ENCODE measurements at regions of chr12 and their contacts with region 1.

Region 1: GRCh38 chr12:12070674-12071656 is at the start of gene BCL2L14:
- DNase-seq: peak; percentile 74 to 77
- H3K4me3 ChIP-seq: peak within 1 kb of the TSS; percentile 49
- H3K4me3 Mint-ChIP-seq: peak within 1 kb of the TSS; percentile 66
- H3K27ac Mint-ChIP-seq: peak within 1 kb of the TSS; percentile 73
- H3K4me1 ChIP-seq: peaks cover 27% of the 10 kb centered on the region
- H3K4me1 Mint-ChIP-seq: peaks cover 23% of the 10 kb centered on the region
- H3K27me3 ChIP-seq: no peaks in the 10 kb centered on the region
- H3K27me3 Mint-ChIP-seq: no peaks in the 10 kb centered on the region
- CTCF ChIP-seq: peak in 1 of 2 experiments; percentile 48
- total RNA-seq, gene BCL2L14: 5.9 and 8.0 TPM in 2 replicates

Region 2: GRCh38 chr12:12095021-12095420 is 24.1 kb after region 1 on chr12:
- CTCF ChIA-PET with region 1: no interaction called
- POLR2A ChIA-PET with region 1: no interaction called
- intact Hi-C with region 1: loop called (anchors 2 kb)
- DNase-seq: no peak
- H3K4me3 ChIP-seq: no peak overlapping the region
- H3K4me3 Mint-ChIP-seq: peak overlapping the region; percentile 22
- H3K27ac Mint-ChIP-seq: no peak overlapping the region
- H3K4me1 ChIP-seq: peaks cover 18% of the 10 kb centered on the region; the same call in 1 of the 2 replicates
- H3K4me1 Mint-ChIP-seq: peaks cover 25% of the 10 kb centered on the region
- H3K27me3 ChIP-seq: no peaks in the 10 kb centered on the region
- H3K27me3 Mint-ChIP-seq: no peaks in the 10 kb centered on the region
- CTCF ChIP-seq: no peak

Region 3: GRCh38 chr12:12138203-12139154 is 67.5 kb after region 1 on chr12:
- CTCF ChIA-PET with region 1: no interaction called
- POLR2A ChIA-PET with region 1: no interaction called
- intact Hi-C with region 1: loop called (anchors 5 kb)
- DNase-seq: no peak
- H3K4me3 ChIP-seq: no peak overlapping the region
- H3K4me3 Mint-ChIP-seq: no peak overlapping the region
- H3K27ac Mint-ChIP-seq: no peak overlapping the region
- H3K4me1 ChIP-seq: peaks cover 8% of the 10 kb centered on the region; the same call in 1 of the 2 replicates
- H3K4me1 Mint-ChIP-seq: no peaks in the 10 kb centered on the region
- H3K27me3 ChIP-seq: no peaks in the 10 kb centered on the region
- H3K27me3 Mint-ChIP-seq: no peaks in the 10 kb centered on the region
- CTCF ChIP-seq: no peak

Region 4: GRCh38 chr12:12349711-12350665 is 279.0 kb after region 1 on chr12 and contains the start of gene MANSC1:
- CTCF ChIA-PET with region 1: interaction called, 13 read pairs
- POLR2A ChIA-PET with region 1: no interaction called
- intact Hi-C with region 1: loop called (anchors 5 kb)
- DNase-seq: peak; percentile 83 to 84
- H3K4me3 ChIP-seq: peak within 1 kb of the TSS; percentile 86
- H3K4me3 Mint-ChIP-seq: peak within 1 kb of the TSS; percentile 83
- H3K27ac Mint-ChIP-seq: peak within 1 kb of the TSS; percentile 85
- H3K4me1 ChIP-seq: peaks cover 13% of the 10 kb centered on the region
- H3K4me1 Mint-ChIP-seq: peaks cover 15% of the 10 kb centered on the region
- H3K27me3 ChIP-seq: no peaks in the 10 kb centered on the region
- H3K27me3 Mint-ChIP-seq: no peaks in the 10 kb centered on the region
- CTCF ChIP-seq: peak; percentile 69 to 89
- total RNA-seq, gene MANSC1: 27.5 and 28.9 TPM in 2 replicates

Measured in Caco-2 (cell line).